ENCODE measurements at regions of chr6 and their contacts with region 1.

Region 1: GRCh38 chr6:83411731-83412130 is 19.1 kb downstream of the ME1 start:
- DNase-seq: no peak
- ATAC-seq: no peak
- H3K4me3 ChIP-seq: no peak overlapping the region
- H3K4me3 Mint-ChIP-seq: no peak overlapping the region
- H3K27ac ChIP-seq: no peak overlapping the region
- H3K27ac Mint-ChIP-seq: no peak overlapping the region
- H3K4me1 ChIP-seq: no peaks in the 10 kb centered on the region
- H3K4me1 Mint-ChIP-seq: no peaks in the 10 kb centered on the region
- H3K27me3 ChIP-seq: no peaks in the 10 kb centered on the region
- H3K27me3 Mint-ChIP-seq: no peaks in the 10 kb centered on the region
- CTCF ChIP-seq: no peak

Region 2: GRCh38 chr6:83119742-83120300 is 291.9 kb before region 1 on chr6:
- CTCF ChIA-PET with region 1: no interaction called
- POLR2A ChIA-PET with region 1: no interaction called
- intact Hi-C with region 1: no loop called
- DNase-seq: no peak
- ATAC-seq: no peak
- H3K4me3 ChIP-seq: no peak overlapping the region
- H3K4me3 Mint-ChIP-seq: no peak overlapping the region
- H3K27ac ChIP-seq: no peak overlapping the region
- H3K27ac Mint-ChIP-seq: no peak overlapping the region
- H3K4me1 ChIP-seq: no peaks in the 10 kb centered on the region
- H3K4me1 Mint-ChIP-seq: no peaks in the 10 kb centered on the region
- H3K27me3 ChIP-seq: no peaks in the 10 kb centered on the region
- H3K27me3 Mint-ChIP-seq: no peaks in the 10 kb centered on the region
- CTCF ChIP-seq: no peak

Region 3: GRCh38 chr6:83536034-83536646 is 124.4 kb after region 1 on chr6:
- CTCF ChIA-PET with region 1: no interaction called
- POLR2A ChIA-PET with region 1: no interaction called
- intact Hi-C with region 1: no loop called
- DNase-seq: peak in 8 of 9 experiments; percentile 12 to 57 (median 38)
- ATAC-seq: no peak
- H3K4me3 ChIP-seq: no peak overlapping the region
- H3K4me3 Mint-ChIP-seq: no peak overlapping the region
- H3K27ac ChIP-seq: no peak overlapping the region
- H3K27ac Mint-ChIP-seq: no peak overlapping the region
- H3K4me1 ChIP-seq: no peaks in the 10 kb centered on the region
- H3K4me1 Mint-ChIP-seq: no peaks in the 10 kb centered on the region
- H3K27me3 ChIP-seq: no peaks in the 10 kb centered on the region
- H3K27me3 Mint-ChIP-seq: peaks cover 2% of the 10 kb centered on the region
- CTCF ChIP-seq: peak; percentile 63

Region 4: DNA sequence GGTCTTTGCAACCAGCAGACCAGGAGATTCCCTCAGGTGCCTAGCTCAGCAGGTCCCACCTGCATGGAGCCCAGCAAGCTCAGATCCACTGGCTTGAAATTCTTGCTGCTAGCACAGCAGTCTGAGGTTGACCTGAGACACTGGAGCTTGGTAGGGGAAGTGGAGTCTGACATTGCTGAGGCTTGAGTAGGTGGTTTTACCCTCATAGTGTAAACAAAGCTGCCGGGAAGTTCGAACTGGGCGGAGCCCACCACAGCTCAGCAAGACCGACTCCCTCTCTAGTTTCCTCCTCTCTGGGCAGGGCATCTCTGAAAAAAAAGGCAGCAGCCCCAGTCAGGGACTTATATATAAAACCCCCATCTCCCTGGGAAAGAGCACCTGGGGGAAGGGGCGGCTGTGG is 134.9 kb after region 1 on chr6:
- CTCF ChIA-PET with region 1: no interaction called
- POLR2A ChIA-PET with region 1: no interaction called
- intact Hi-C with region 1: no loop called
- DNase-seq: peak in 3 of 9 experiments; percentile 19 to 32 (median 21)
- ATAC-seq: no peak
- H3K4me3 ChIP-seq: no peak overlapping the region
- H3K4me3 Mint-ChIP-seq: no peak overlapping the region
- H3K27ac ChIP-seq: no peak overlapping the region
- H3K27ac Mint-ChIP-seq: no peak overlapping the region
- H3K4me1 ChIP-seq: no peaks in the 10 kb centered on the region
- H3K4me1 Mint-ChIP-seq: peaks cover 2% of the 10 kb centered on the region
- H3K27me3 ChIP-seq: peaks cover 0 to 2% of the 10 kb centered on the region in 2 experiments
- H3K27me3 Mint-ChIP-seq: peaks cover 8% of the 10 kb centered on the region
- CTCF ChIP-seq: no peak

Region 5: GRCh38 chr6:84093441-84094435 is 682.0 kb after region 1 on chr6:
- CTCF ChIA-PET with region 1: no interaction called
- POLR2A ChIA-PET with region 1: no interaction called
- intact Hi-C with region 1: no loop called
- DNase-seq: no peak
- ATAC-seq: no peak
- H3K4me3 ChIP-seq: no peak overlapping the region
- H3K4me3 Mint-ChIP-seq: no peak overlapping the region
- H3K27ac ChIP-seq: no peak overlapping the region
- H3K27ac Mint-ChIP-seq: no peak overlapping the region
- H3K4me1 ChIP-seq: no peaks in the 10 kb centered on the region
- H3K4me1 Mint-ChIP-seq: no peaks in the 10 kb centered on the region
- H3K27me3 ChIP-seq: no peaks in the 10 kb centered on the region
- H3K27me3 Mint-ChIP-seq: no peaks in the 10 kb centered on the region
- CTCF ChIP-seq: no peak

Region 6: GRCh38 chr6:84197708-84198107 is 786.0 kb after region 1 on chr6:
- CTCF ChIA-PET with region 1: no interaction called
- POLR2A ChIA-PET with region 1: no interaction called
- intact Hi-C with region 1: loop called in 1 of 2 experiments (anchors 5 kb)
- DNase-seq: no peak
- ATAC-seq: no peak
- H3K4me3 ChIP-seq: no peak overlapping the region
- H3K4me3 Mint-ChIP-seq: no peak overlapping the region
- H3K27ac ChIP-seq: no peak overlapping the region
- H3K27ac Mint-ChIP-seq: no peak overlapping the region
- H3K4me1 ChIP-seq: no peaks in the 10 kb centered on the region
- H3K4me1 Mint-ChIP-seq: no peaks in the 10 kb centered on the region
- H3K27me3 ChIP-seq: no peaks in the 10 kb centered on the region
- H3K27me3 Mint-ChIP-seq: no peaks in the 10 kb centered on the region
- CTCF ChIP-seq: no peak

Measured in CD8-positive, alpha-beta T cell (primary cell).